ENCODE measurements at regions of chr6 and their contacts with region 1.

Region 1: DNA sequence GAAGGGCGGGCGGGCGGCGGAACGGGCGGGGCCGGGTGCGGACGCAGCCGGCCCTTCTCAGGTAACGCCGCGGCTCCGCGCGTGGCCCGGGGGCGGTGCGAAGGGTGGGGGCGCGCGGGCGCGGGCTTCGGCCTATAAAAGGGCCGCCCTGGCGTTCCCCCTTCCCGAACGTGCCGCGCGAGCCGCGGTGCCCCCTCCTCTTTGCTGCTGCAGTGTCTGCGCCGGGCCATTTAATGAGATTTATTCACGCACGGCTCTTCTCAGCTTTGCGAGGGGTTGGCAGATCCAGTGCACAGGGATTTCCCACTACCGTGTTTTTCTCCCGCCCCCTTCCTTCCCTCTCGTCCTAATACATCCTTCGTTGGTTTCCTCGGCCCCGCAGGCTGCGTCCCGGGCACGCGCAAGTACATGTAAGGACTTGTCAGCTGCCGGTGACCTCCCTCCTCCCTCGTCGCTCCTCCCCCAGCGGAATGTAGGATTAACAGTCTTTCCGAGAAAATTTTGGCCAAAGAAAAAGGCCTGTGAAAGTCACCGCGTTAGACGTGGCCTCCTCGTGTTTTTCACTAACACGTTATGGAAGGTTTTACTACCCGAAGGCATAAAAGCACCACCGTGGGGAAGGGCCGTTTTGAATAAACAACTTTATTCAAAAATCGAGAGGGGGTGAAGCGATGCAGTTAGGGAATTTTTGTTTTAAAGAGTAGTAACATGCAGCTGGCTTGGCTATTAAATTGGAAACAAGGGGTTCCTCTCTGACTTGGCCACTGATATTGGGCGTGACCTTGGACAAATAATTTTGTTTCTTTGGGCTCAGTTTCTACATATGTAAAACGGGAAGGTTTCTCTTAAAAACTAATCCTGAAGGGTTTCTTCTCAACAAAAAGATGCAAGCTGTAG is 966 bp upstream of the REV3L start:
- DNase-seq: peak; percentile 73 to 91 (median 88)
- H3K4me3 ChIP-seq: peak overlapping the region; percentile 59 to 98 (median 89)
- H3K27ac ChIP-seq: peak overlapping the region; percentile 94 to 100 (median 99)
- H3K27me3 ChIP-seq: no peaks in the 10 kb centered on the region
- CTCF ChIP-seq: peak in 11 of 56 donors; percentile 5 to 27 (median 8)

Region 2: GRCh38 chr6:111259089-111259831 is 224.7 kb before region 1 on chr6:
- intact Hi-C with region 1: loop called in 1 of 2 experiments (anchors 2 kb)
- DNase-seq: peak; percentile 97 to 99 (median 98)
- H3K4me3 ChIP-seq: peak overlapping the region; percentile 61 to 100 (median 89)
- H3K27ac ChIP-seq: peak overlapping the region in 51 of 59 donors; percentile 1 to 88 (median 73)
- H3K27me3 ChIP-seq: peaks cover 0 to 8% (median 0%) of the 10 kb centered on the region in 45 donors
- CTCF ChIP-seq: peak; percentile 92 to 100 (median 98)

Region 3: DNA sequence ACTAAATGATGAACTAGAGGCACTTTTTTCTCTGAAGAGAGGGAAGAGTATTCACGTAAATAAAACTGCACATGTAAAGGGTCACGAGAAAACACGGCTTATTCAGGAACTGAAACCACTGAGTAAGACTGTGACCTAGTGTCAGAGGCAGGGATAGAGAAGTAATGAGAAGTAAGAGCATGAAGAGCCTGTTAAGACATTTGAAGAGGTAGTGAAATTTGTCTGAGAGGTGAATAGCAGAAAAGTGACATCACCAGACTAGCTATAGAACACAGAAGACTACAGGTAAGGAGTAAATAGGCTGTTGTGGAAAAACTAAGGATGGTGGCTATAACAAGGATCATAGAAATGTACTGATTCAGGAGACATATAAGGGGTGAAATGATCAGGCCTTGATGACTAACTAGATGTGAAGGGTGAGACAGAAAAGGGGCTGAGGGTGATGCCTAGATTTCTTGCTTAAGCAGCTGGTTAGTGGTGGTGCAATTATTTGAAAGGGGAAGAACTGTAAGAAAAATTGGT is 77.7 kb before region 1 on chr6:
- intact Hi-C with region 1: no loop called
- DNase-seq: no peak
- H3K4me3 ChIP-seq: no peak overlapping the region
- H3K27ac ChIP-seq: peak overlapping the region in 11 of 59 donors; percentile 6 to 62 (median 21)
- H3K27me3 ChIP-seq: no peaks in the 10 kb centered on the region
- CTCF ChIP-seq: no peak

Region 4: GRCh38 chr6:111417181-111417585 is 66.8 kb before region 1 on chr6:
- intact Hi-C with region 1: loop called (anchors 5 kb)
- DNase-seq: peak in 7 of 10 donors; percentile 20 to 69 (median 37)
- H3K4me3 ChIP-seq: peak overlapping the region in 31 of 59 donors; percentile 2 to 45 (median 23)
- H3K27ac ChIP-seq: peak overlapping the region in 54 of 59 donors; percentile 0 to 81 (median 58)
- H3K27me3 ChIP-seq: no peaks in the 10 kb centered on the region
- CTCF ChIP-seq: peak in 1 of 56 donors; percentile 23

Region 5: DNA sequence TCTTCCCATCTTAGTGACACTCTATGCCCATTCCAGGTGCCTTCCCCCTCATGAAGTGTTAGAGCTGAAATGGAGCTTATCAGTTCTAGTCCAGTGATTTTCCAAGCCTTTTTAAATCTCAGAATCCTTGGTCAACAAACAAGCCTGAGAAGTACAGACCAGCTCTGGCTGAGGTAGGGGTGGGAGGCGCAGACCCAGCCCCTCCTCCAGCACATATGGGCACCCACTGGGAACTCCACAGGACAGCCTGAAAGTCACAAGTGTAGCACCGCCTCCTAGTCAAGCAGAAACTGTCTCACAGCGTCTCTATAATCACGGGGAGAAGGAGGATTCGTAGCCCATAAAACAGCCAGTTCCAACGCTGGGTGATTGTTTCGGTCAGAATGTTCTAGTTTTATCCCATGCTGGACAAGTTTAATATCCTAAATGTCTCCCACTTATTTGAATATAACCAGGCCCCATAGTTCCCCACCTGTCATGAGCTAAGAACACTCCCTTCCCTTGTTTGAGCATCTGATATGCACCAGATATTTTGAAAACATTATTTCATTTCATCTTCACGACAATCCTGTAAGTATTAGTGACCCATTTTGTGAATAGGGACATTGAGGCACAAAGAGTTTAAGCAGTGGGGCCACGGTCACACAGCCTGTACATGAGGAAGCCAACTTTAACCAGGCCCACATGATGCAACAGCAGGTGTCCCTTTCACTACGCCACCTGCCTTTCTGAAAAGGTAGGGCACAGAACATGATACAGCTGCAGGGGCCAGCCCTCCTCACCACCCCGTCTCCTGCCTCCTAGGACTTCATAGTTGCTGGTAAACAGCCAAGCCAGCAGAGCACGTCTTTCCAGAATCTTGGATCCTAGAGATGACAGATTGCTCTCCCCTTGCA is 81.6 kb after region 1 on chr6:
- intact Hi-C with region 1: loop called in 1 of 2 experiments (anchors 10 kb)
- DNase-seq: peak in 1 of 10 donors; percentile 36
- H3K4me3 ChIP-seq: peak overlapping the region in 3 of 59 donors; percentile 38 to 58 (median 58)
- H3K27ac ChIP-seq: peak overlapping the region in 56 of 59 donors; percentile 8 to 87 (median 74)
- H3K27me3 ChIP-seq: no peaks in the 10 kb centered on the region
- CTCF ChIP-seq: no peak

Region 6: DNA sequence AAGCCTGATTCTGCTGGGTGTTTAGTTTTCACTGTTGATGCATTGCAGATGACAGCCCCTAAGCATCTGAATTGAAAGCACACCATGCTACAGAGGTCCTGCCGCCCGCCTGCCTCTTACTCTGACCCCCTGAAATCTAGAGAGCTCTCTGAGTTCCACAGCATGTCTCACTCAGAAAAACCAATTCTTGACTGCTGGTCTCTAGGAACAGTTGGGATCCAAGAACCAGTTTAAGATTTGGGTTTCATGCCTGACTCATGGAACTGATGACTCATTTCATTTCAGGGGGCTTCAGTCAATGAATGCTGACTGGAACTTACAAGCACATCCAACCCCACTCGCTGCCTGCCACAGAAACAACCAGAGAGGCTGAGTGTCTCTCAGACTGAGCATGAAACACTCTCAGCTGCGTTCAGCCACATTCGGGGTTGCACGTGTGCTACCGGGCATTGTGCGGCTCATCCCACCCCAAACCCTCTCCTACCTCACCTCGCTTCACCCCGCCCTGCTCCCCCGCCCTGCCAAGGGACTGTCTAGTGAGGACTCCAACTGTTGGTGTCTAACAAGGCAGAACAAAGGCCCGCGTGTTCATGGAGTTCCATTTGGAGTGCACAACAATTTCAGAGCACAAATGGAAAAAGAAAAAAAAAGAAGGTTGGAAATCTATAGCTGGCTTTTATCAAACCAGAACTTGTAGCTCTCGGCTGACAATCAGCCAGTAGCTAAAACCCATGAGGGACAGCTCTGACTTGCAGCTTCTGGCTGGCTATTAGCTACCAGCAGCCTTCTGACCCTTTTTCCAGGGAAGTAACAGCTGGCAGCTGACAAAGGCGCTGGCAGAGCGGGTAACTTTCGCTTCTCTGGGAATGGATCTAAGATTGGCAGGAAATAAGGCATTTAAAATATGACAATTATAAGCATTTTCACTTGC is 141.7 kb after region 1 on chr6:
- intact Hi-C with region 1: loop called in 1 of 2 experiments (anchors 5 kb)
- DNase-seq: peak in 7 of 10 donors; percentile 38 to 69 (median 53)
- H3K4me3 ChIP-seq: peak overlapping the region; percentile 5 to 69 (median 47)
- H3K27ac ChIP-seq: peak overlapping the region in 40 of 59 donors; percentile 0 to 80 (median 46)
- H3K27me3 ChIP-seq: no peaks in the 10 kb centered on the region
- CTCF ChIP-seq: peak in 3 of 56 donors; percentile 8 to 22 (median 10)

Region 7: DNA sequence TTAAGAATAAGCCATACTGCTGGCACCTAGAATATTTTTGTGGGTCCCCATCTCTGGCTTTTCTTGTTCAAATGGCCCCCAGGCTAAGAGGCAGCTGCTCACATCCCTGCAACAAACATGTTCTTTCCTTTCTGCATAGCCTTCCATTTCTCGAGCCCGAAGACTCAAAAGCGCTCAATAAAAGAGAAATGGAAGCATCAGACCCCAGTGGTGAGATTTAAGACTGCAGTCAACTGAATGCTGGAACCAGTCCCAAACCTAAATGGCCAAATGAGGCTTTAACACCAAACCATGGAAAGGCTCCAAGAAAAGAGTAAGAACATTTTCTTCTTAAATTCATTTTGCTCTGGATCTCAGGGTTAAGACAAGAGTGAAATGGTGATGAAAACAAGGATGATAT is 243.8 kb after region 1 on chr6:
- intact Hi-C with region 1: no loop called
- DNase-seq: no peak
- H3K4me3 ChIP-seq: no peak overlapping the region
- H3K27ac ChIP-seq: peak overlapping the region in 15 of 59 donors; percentile 1 to 66 (median 18)
- H3K27me3 ChIP-seq: no peaks in the 10 kb centered on the region
- CTCF ChIP-seq: peak in 46 of 56 donors; percentile 9 to 62 (median 38)

Measured in dorsolateral prefrontal cortex (tissue), 120 donors.